Heart right ventricle (tissue), 16 donors: ENCODE measurements at regions of chr5 and their contacts with region 1.

Region 1: DNA sequence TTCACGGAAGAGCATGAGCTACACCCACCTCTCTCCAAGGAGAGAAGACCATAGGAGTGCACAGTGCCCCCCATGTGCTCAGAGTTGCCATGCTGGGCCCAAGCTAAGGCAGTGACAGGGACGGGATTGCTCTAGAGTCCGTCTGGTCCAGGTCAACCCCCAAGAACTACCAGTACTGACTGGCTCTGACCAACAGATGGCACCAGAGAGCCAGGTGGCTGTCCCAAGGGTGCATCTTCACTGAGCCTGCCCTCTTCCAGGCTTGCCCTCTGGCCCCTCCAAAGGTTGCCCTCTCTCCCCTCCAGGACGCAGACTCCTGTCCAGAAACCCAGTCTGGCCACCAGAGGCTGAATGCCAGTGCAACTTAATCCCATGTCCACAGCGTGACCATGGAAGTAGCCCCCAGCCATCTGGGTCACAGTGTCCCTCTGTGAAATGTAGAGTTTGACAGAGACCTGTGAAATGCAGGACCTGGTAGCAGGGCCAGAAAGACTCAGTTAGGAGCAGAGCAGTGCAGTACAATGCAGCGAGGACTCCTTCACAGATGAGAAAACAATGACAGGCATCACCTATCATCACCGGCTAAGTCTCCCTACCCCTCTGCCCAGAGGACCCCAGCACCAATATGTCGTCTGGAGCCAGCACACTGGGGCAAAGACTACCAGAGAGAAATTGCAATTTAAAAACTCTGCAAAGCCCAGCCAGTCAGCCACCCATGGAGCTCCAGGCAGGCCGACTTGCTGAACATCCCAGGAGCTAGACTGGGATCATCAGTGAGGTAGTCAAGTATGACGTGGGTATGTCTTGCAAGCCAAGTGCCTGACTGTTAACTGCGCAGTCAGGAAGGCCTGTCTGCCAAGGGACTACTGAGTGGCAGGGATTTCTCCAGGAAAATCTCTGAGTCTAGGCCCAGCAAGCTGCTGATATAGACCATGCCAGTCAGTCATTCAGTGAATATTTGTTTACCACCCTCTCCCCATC is 7.7 kb upstream of the SKP1 start:
- DNase-seq: peak; percentile 56 to 67
- ATAC-seq: peak; percentile 73 to 92 (median 87)
- H3K4me3 ChIP-seq: no peak overlapping the region
- H3K27ac ChIP-seq: no peak overlapping the region
- H3K4me1 ChIP-seq: peaks cover 0 to 17% (median 10%) of the 10 kb centered on the region in 9 donors
- H3K27me3 ChIP-seq: no peaks in the 10 kb centered on the region
- CTCF ChIP-seq: peak; percentile 86 to 98 (median 94)

Region 2: DNA sequence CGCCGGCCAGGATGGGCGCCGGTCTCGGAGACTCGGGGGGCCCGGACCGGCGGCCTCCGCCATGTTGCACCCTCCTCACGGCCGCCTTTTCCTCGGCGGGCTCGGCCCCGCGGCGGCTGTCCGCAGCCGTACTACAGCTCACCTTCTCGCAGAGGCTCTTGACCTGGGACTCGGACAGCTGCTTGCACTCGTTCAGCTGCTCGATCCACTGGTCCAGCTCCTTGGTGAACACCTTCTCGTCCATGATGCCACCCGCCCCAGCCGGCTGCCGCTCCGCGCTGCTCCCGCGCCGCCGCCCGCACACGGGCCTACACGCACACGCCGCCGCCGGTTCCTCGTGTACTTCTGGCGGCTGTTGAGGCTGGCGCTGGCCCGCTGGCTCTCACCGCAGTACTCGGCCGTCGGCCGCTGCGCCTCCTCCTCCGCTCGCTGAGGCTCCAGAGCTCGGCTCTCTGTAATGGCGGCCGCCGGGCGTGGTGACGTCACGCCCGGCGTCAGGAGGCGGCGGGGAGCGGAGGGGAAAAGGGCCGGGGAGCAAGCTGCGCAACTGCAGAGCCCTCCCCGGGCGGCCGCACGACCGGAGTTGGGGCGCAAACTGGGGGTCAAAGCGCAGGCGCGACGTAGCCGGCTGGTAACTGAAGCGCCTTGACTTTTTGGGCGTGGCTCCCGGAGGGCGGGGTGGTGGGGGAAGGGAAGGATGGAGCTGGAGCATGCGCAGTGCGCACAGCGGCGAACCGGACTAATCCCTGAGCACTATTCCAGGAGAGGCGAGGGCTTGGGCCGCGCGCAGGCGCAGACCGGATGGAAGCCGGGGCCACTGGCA is 41.4 kb after region 1 on chr5 and contains the start of gene PPP2CA:
- intact Hi-C with region 1: loop called in 2 of 10 experiments (anchors 5 kb)
- DNase-seq: peak; percentile 99
- ATAC-seq: peak; percentile 93 to 98 (median 96)
- H3K4me3 ChIP-seq: peak within 1 kb of the TSS; percentile 74 to 99 (median 86)
- H3K27ac ChIP-seq: peak within 1 kb of the TSS; percentile 95 to 100 (median 98)
- H3K4me1 ChIP-seq: peaks cover 0 to 68% (median 53%) of the 10 kb centered on the region in 9 donors
- H3K27me3 ChIP-seq: no peaks in the 10 kb centered on the region
- CTCF ChIP-seq: peak in 1 of 9 donors; percentile 12
- total RNA-seq, gene PPP2CA: 136 to 249 (median 184) TPM

Region 3: GRCh38 chr5:134541736-134542376 is 357.4 kb after region 1 on chr5:
- intact Hi-C with region 1: no loop called
- DNase-seq: peak; percentile 59 to 70
- ATAC-seq: peak in 7 of 8 donors; percentile 57 to 78 (median 72)
- H3K4me3 ChIP-seq: no peak overlapping the region
- H3K27ac ChIP-seq: no peak overlapping the region
- H3K4me1 ChIP-seq: peaks cover 0 to 66% (median 49%) of the 10 kb centered on the region in 9 donors
- H3K27me3 ChIP-seq: no peaks in the 10 kb centered on the region
- CTCF ChIP-seq: no peak

Region 4: DNA sequence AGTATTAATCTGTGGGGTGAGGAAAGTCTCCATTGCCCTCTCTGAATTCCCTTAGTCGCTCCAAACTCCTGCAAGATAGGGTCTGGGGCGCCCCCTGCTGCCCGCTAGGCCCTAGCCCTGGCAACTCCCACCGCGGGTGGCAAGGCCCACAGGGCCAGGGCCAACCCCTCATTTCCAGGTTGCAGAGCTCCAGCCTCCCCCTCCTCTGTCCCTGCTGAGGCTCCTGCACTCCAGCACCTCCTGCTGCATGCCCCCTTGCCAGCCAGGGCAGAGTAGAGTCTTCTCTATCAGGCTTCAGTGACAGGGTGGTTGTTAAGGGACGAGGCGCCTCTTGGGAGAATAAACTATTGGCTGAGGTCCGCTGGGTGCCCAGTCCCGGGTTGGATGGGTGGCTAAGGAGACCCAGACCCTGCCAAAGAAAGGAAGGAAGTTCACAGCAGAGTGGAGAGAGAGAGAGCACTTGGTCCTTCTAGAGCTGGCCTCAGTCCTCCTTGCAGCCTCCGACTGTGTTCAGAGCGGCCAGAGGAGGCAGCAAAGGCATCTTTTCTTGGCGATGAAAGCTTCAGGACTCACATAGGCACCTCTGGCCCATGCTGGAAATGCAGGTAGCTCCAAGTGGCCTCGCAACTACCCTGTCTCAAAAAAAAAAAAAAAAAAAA is 402.6 kb after region 1 on chr5:
- intact Hi-C with region 1: loop called in 8 of 10 experiments (anchors 5 to 10 kb)
- DNase-seq: peak; percentile 78 to 89
- ATAC-seq: peak; percentile 82 to 93 (median 88)
- H3K4me3 ChIP-seq: peak overlapping the region in 5 of 10 donors; percentile 7 to 31 (median 15)
- H3K27ac ChIP-seq: no peak overlapping the region
- H3K4me1 ChIP-seq: peaks cover 4 to 26% (median 16%) of the 10 kb centered on the region in 9 donors
- H3K27me3 ChIP-seq: no peaks in the 10 kb centered on the region
- CTCF ChIP-seq: peak; percentile 65 to 92 (median 81)

Region 5: DNA sequence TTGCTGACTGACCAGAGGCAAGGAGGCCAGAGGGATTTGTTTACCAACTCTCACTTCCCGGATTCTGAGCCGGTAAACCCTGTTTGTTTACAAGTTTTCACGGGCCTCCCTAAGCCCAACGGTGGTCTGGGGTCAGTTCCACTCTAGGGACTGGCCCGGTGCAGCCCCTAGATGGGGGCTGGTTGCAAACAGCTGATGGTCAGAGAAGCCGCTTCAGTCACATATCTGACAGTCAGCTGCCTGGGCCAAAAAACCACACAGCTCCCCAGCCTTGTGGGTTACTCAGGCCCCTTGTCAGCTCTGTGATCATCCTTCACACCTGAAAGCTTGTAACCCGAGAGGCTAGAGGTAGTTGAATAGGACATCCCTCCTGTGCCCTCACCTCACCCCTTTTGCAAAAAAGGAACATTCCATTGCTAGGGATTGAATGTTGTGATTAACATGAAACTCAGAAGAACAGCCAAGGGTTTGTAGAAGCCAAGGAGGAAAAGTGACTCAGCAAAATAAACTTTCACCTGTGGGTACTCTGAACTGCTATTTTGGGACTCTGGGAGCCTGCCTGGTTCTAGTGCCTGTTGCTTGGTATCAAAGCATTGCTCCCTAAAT is 407.8 kb after region 1 on chr5:
- intact Hi-C with region 1: loop called in 8 of 10 experiments (anchors 5 to 10 kb)
- DNase-seq: no peak
- ATAC-seq: peak in 7 of 8 donors; percentile 38 to 73 (median 60)
- H3K4me3 ChIP-seq: no peak overlapping the region
- H3K27ac ChIP-seq: peak overlapping the region in 8 of 10 donors; percentile 27 to 74 (median 62)
- H3K4me1 ChIP-seq: peaks cover 0 to 33% (median 14%) of the 10 kb centered on the region in 9 donors
- H3K27me3 ChIP-seq: no peaks in the 10 kb centered on the region
- CTCF ChIP-seq: no peak